A549 (cell line): ENCODE measurements at regions of chr19 and their contacts with region 1.

Region 1: DNA sequence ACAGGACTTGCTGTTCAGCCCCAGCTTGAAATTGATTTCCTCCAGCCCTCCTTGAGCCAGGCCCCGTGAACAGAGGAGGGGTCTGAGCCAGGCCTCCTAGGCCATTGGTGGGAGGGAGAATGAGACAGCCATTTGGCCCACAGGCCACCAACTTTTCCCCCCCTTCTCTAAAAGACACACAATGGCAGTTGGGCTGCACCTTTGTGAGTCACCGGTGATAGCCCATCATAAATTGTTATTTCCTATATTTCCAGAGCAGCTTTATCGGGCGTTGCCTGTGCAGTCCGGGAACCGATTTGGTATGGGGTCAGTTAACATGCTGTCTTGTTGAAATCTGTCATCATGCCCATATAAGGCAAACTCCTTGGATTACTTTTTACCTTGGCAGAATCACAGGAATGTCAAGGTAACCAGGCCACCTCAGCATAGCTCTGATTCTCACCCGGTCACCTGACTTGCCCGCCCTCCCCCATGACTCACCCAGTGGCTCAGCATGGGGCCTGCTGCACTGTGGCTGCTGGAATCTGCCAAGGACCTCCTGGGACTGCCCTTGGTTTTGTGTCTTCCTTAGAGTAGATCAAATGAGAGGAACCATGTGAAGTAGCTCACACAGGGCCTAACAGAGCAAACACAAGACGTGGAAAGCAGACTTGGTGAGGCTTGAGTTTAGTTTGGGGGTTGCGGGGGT is 36.1 kb downstream of the ACTN4 start:
- DNase-seq: peak; percentile 100
- ATAC-seq: peak; percentile 68 to 74
- H3K4me3 ChIP-seq: peak overlapping the region; percentile 6; the same call in 2 of the 3 replicates
- H3K27ac ChIP-seq: peak overlapping the region; percentile 93 to 94
- H3K4me1 ChIP-seq: peaks cover 90% of the 10 kb centered on the region
- CTCF ChIP-seq: no peak
- EP300 ChIP-seq: peak; percentile 93 to 95; a peak in 4 of 5 replicates
- POLR2A ChIP-seq: no peak; the same call in 1 of the 2 replicates
- RAD21 ChIP-seq: peak in 1 of 2 experiments; percentile 37

Region 2: DNA sequence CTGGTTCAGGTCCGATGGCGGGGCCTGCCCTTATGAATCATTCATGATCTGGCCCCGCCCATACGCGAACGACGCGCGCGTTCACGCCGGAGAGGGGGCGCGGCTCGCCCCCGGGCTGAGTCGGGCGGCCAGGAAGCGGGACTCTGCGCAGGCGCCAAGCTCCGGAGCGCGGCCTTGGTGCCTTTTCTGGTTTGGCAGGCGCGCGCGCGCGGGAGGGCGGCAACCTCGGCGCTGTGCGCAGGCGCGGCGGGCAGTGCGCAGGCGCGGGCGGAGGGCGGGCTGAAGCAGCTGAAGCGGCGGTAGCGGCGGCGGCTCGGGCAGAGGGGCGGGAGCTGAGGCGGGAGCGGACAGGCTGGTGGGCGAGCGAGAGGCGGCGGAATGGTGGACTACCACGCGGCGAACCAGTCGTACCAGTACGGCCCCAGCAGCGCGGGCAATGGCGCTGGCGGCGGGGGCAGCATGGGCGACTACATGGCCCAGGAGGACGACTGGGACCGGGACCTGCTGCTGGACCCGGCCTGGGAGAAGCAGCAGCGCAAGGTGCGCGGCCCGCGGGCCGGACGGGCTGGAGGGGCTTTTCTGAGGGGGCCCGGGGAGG is 36.1 kb before region 1 on chr19 and contains the start of gene ACTN4:
- CTCF ChIA-PET with region 1: interaction called, 336 read pairs
- POLR2A ChIA-PET with region 1: interaction called, 61 read pairs
- DNase-seq: peak; percentile 99
- ATAC-seq: peak; percentile 65 to 68
- H3K4me3 ChIP-seq: peak within 1 kb of the TSS; percentile 85
- H3K27ac ChIP-seq: peak within 1 kb of the TSS; percentile 87 to 91
- H3K4me1 ChIP-seq: peaks cover 38% of the 10 kb centered on the region
- CTCF ChIP-seq: no peak
- EP300 ChIP-seq: no peak; a peak in 1 of 5 replicates
- POLR2A ChIP-seq: peak; percentile 100
- RAD21 ChIP-seq: peak in 1 of 2 experiments; percentile 50; a peak in 2 of 5 replicates
- polyA plus RNA-seq, gene ACTN4: 605 and 614 TPM in 2 replicates

Region 3: GRCh38 chr19:38658462-38659306 is 24.9 kb before region 1 on chr19:
- CTCF ChIA-PET with region 1: interaction called, 336 read pairs
- POLR2A ChIA-PET with region 1: interaction called, 38 read pairs
- DNase-seq: peak; percentile 99
- ATAC-seq: peak; percentile 82 to 88
- H3K4me3 ChIP-seq: peak overlapping the region; percentile 25
- H3K27ac ChIP-seq: peak overlapping the region; percentile 87 to 91
- H3K4me1 ChIP-seq: peaks cover 98% of the 10 kb centered on the region
- CTCF ChIP-seq: no peak
- EP300 ChIP-seq: peak; percentile 65 to 73; a peak in 2 of 5 replicates
- POLR2A ChIP-seq: no peak
- RAD21 ChIP-seq: peak; percentile 30 to 38; a peak in 2 of 5 replicates

Region 4: DNA sequence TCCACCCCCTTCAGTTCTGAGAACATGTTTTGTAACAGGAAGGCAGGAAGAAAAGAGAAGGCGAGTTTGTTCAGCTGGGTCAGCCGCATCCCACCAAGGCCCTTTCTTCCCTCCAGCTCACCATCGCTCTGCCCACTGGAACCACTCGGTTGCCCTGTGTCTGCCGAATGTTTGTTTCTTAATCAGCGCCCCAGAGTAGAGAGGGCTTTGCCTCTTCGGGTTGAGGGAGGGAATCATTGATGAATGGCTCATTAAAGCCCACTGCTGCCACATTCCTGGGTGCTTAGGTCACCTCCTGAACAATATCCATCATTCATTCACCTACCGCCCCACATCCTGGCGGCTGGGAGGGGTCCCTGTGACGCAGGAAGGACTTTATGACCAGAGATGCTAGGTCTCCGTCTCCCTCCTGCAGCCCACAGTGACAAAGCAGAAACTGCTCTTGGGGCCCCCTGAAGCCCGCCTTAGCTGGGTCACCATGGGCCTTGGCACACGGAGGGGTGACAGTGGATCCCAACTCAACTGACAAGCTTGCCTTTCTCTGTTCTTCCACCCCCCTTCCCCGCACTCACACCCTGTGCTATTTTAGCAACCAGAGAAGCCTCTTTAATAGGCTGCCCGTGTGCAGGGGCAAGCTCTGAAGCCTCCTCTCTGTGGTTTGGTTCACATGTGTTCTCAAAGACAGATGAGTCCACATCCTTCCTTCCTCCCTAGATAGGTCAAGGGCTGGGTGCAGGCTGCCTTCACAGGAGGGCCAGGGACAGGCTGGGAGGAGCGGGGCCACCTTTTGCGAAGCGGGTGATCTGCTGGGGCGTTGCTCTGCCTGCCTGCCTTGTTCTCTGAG is 10.1 kb after region 1 on chr19:
- CTCF ChIA-PET with region 1: interaction called, 764 read pairs
- POLR2A ChIA-PET with region 1: interaction called, 6 read pairs
- DNase-seq: peak; percentile 91 to 92
- ATAC-seq: peak; percentile 10 to 54
- H3K4me3 ChIP-seq: 0 out of 3 replicates have a peak overlapping the region, but pooled peaks have one; percentile 1
- H3K27ac ChIP-seq: peak overlapping the region; percentile 93 to 94
- H3K4me1 ChIP-seq: peaks cover 100% of the 10 kb centered on the region
- CTCF ChIP-seq: no peak
- EP300 ChIP-seq: peak; percentile 55 to 84; a peak in 3 of 5 replicates
- POLR2A ChIP-seq: no peak
- RAD21 ChIP-seq: 0 out of 5 replicates have a peak, but pooled peaks of 1 of the 2 experiments have one; percentile 8

Region 5: DNA sequence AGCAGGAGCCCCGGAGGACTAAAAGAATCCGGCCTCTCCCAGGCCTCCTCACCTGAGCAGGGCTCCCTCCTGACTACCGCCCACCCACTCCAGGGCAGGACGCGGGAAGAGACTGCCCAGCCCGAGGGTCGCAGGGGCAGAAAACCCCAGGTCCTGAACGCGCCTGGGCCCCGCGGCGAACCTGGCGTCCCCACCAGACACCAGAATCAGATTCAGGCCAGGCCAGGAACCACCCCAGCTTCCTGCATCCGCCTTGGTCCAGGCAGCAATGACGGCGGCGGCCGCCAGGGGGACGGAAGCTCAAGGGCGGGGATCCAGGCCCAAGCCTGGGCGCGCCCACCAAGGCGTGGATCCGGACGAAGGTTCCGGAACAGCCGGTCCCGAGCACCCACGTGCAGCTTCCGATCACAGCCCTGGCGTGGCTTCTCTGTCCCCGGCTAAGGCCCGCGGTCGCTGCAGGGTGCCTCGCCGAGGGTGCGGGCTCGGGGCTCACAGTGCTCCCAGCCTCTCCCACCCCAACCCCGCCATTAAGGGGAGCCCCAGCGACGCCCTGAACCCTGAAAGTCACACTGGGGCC is 86.2 kb after region 1 on chr19:
- CTCF ChIA-PET with region 1: no interaction called
- POLR2A ChIA-PET with region 1: no interaction called
- DNase-seq: peak; percentile 77 to 85
- ATAC-seq: peak; percentile 67 to 89
- H3K4me3 ChIP-seq: no peak overlapping the region
- H3K27ac ChIP-seq: peak overlapping the region; percentile 28 to 62; a peak in 4 of 6 replicates
- H3K4me1 ChIP-seq: no peaks in the 10 kb centered on the region; the same call in 2 of the 3 replicates
- CTCF ChIP-seq: peak; percentile 61
- EP300 ChIP-seq: no peak
- POLR2A ChIP-seq: no peak; the same call in 1 of the 2 replicates
- RAD21 ChIP-seq: peak; percentile 64 to 71